ENCODE measurements at regions of chr5 and their contacts with region 1.

Region 1: GRCh38 chr5:151825445-151825844 is 53.7 kb downstream of the G3BP1 start:
- DNase-seq: peak; percentile 81
- H3K4me3 Mint-ChIP-seq: no peak overlapping the region
- H3K27ac Mint-ChIP-seq: no peak overlapping the region
- H3K4me1 Mint-ChIP-seq: no peaks in the 10 kb centered on the region
- H3K27me3 Mint-ChIP-seq: no peaks in the 10 kb centered on the region
- CTCF ChIP-seq: peak; percentile 94

Region 2: DNA sequence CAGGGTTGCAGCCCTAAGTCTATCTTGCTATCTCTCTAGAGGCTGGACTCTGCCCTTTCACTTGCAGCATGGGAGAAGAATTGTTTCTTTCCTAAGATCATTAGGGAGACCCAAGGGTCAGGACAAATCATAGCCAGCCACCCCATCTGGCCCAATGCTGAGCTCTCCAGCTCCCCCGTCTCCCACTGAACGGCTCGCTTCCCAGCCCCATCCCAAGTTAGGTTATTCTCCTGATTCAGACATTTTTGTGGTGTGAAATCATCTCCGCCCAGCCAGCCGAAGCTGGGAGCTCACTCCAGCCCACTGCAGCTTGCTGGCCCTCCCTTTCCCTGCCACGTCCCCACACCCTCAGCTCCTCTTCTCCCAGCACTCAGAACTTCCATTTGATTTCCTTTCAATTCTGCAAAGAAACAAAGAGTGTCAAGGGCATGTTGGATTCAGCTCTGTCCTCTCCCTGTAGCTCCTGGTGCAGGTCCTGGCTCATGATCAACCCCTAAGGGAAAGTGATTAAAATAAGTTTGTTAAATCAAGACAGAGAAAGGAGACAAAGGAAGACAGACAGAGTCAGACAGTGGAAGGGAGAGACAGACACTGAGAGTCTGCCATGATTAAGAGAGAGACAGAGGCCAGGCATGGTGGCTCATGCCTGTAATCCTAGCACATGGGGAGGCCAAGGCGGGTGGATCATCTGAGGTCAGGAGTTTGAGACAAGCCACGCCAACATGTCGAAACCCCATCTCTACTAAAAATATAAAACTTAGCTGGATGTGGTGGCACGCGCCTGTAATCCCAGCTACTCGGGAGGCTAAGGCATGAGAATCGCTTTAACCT is 126.2 kb before region 1 on chr5:
- CTCF ChIA-PET with region 1: no interaction called
- POLR2A ChIA-PET with region 1: no interaction called
- intact Hi-C with region 1: no loop called
- DNase-seq: peak; percentile 85
- H3K4me3 Mint-ChIP-seq: peak overlapping the region; percentile 13
- H3K27ac Mint-ChIP-seq: peak overlapping the region; percentile 58
- H3K4me1 Mint-ChIP-seq: peaks cover 18% of the 10 kb centered on the region
- H3K27me3 Mint-ChIP-seq: no peaks in the 10 kb centered on the region
- CTCF ChIP-seq: no peak

Region 3: GRCh38 chr5:151868451-151868850 is 43.0 kb after region 1 on chr5:
- CTCF ChIA-PET with region 1: interaction called, 20 read pairs
- POLR2A ChIA-PET with region 1: interaction called, 3 read pairs
- intact Hi-C with region 1: no loop called
- DNase-seq: no peak
- H3K4me3 Mint-ChIP-seq: no peak overlapping the region
- H3K27ac Mint-ChIP-seq: no peak overlapping the region
- H3K4me1 Mint-ChIP-seq: peaks cover 13% of the 10 kb centered on the region
- H3K27me3 Mint-ChIP-seq: no peaks in the 10 kb centered on the region
- CTCF ChIP-seq: no peak

Region 4: GRCh38 chr5:151896031-151896691 is 70.7 kb after region 1 on chr5:
- CTCF ChIA-PET with region 1: interaction called, 17 read pairs
- POLR2A ChIA-PET with region 1: no interaction called
- intact Hi-C with region 1: no loop called
- DNase-seq: peak; percentile 65
- H3K4me3 Mint-ChIP-seq: peak overlapping the region; percentile 30
- H3K27ac Mint-ChIP-seq: peak overlapping the region; percentile 68
- H3K4me1 Mint-ChIP-seq: peaks cover 23% of the 10 kb centered on the region
- H3K27me3 Mint-ChIP-seq: no peaks in the 10 kb centered on the region
- CTCF ChIP-seq: no peak

Region 5: DNA sequence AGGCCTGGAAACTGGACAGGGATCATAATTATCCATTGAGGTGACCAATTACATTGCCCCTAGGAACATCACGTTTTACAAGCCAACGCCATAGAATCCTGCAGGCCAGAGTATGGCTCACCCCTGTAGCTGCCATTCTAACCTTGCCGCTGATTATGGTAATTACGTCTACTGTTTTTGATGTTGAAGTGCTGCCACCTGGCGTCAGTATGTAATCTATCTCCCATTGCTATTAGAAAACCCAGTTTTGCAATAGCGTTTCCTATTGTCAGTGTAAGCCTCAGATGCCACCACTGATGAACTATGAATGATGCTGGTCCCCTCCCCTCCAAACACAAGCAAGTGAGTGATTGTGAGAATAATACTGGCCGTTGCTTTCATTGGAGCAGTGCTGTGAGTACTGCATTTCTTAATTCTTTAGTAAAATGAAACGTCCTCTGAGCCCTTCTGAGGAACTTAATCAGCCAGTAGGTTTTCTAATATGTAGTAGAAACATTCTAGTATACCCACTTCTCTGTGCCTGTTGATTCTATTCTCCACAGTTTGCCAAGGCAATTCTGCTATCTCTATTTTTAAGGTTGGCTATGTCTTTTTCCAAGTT is 680.1 kb after region 1 on chr5:
- CTCF ChIA-PET with region 1: interaction called, 23 read pairs
- POLR2A ChIA-PET with region 1: no interaction called
- intact Hi-C with region 1: loop called (anchors 1 kb)
- DNase-seq: peak; percentile 81
- H3K4me3 Mint-ChIP-seq: no peak overlapping the region
- H3K27ac Mint-ChIP-seq: no peak overlapping the region
- H3K4me1 Mint-ChIP-seq: no peaks in the 10 kb centered on the region
- H3K27me3 Mint-ChIP-seq: peaks cover 33% of the 10 kb centered on the region
- CTCF ChIP-seq: peak; percentile 68

Measured in MCF 10A (cell line).